Prostate gland (tissue), 2 donors: ENCODE measurements at regions of chr4 and their contacts with region 1.

Region 1: DNA sequence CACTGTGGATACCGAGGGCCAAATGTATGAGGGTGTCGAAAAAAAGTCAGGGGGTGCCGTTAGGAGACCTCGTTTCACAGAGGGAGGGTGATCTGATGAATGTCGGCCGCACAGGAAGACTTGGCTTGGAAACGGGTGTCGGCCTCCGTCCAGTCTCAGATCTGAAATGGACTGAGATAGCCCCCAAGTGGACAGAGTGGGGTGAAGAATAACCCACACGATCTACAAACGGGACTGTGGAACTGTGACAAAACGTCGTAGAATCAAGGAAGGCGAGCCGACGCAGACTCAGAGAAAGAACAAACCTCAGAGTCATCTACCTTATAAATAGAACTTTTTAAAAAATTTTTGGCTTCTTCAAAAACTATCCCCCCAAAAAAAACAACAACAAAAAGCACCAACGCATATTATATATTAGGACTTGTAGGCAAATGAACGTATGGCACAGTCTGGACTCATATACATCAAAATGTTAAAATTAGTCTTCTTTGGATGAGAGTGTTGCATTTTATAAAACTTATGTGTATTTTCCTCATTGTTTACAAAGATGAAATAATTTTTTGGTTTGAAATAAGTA is 63.8 kb upstream of the IRF2 start:
- DNase-seq: peak; percentile 92
- H3K4me3 ChIP-seq: peak overlapping the region; percentile 56 to 62
- H3K27ac ChIP-seq: peak overlapping the region; percentile 97 to 98
- H3K4me1 ChIP-seq: peaks cover 4% of the 10 kb centered on the region
- H3K27me3 ChIP-seq: no peaks in the 10 kb centered on the region
- CTCF ChIP-seq: peak; percentile 38 to 92 (median 78)
- POLR2A ChIP-seq: no peak

Region 2: DNA sequence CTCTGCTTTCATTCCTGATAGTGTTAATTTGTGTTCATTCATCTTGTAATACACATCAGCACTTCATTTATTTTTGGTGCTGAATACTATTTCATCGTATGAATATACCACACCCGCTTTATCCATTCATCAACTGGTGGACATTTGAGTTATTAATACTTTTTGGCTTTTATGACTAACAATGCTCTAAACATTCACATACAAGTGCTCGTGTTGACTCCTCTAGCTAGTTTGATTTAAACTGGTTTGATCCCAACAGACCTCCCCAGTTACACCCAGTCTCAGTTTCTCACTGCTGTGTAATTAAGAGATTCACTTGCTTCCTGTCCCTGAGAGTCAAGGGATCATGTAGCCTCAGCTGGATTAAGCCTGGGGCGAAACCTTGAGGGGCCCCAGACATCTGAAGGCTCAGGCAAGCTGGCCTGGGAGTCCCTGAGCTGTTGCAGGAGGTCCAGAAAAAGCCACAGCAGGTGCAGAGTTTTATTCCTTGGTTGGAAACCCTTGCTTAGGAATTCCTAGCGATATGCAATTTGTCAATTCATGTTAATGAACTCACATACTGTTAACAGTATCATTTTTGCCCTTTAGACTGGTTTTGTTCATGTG is 1163.1 kb before region 1 on chr4:
- intact Hi-C with region 1: no loop called
- DNase-seq: no peak
- H3K4me3 ChIP-seq: no peak overlapping the region
- H3K27ac ChIP-seq: no peak overlapping the region
- H3K4me1 ChIP-seq: no peaks in the 10 kb centered on the region
- H3K27me3 ChIP-seq: no peaks in the 10 kb centered on the region
- CTCF ChIP-seq: no peak
- POLR2A ChIP-seq: no peak

Region 3: GRCh38 chr4:184263910-184264732 is 274.0 kb before region 1 on chr4:
- intact Hi-C with region 1: loop called (anchors 2 kb)
- DNase-seq: peak; percentile 92
- H3K4me3 ChIP-seq: no peak overlapping the region
- H3K27ac ChIP-seq: no peak overlapping the region
- H3K4me1 ChIP-seq: no peaks in the 10 kb centered on the region
- H3K27me3 ChIP-seq: no peaks in the 10 kb centered on the region
- CTCF ChIP-seq: peak; percentile 86 to 97 (median 91)
- POLR2A ChIP-seq: no peak

Region 4: DNA sequence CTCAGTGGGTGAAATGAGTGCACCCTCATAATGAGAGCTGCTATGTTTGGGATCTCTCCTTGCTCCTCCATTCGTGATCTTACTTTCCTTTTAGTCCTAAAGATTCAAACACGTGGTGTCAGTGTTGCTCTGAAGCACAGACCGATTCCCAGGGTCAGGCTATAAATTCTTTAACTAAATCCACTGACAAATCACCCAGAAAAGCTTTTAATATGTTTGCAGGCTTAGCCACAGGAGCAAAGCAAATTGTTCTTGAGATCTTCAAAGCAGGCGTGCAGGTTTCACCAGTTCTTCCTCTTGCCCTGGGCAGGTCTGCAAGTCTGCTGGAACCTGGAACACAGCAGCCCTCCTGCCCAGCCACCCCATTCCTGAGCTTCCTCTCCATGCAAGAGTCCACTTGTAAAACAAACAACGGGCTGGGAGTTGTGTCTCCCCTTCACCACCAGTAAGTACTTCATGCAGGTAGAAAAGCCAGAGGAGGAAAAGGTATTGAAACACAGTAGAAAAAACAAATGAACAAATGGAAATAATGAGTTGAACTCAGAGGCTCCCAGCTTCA is 250.3 kb before region 1 on chr4:
- intact Hi-C with region 1: loop called (anchors 2 kb)
- DNase-seq: peak; percentile 94
- H3K4me3 ChIP-seq: peak overlapping the region in 1 of 2 donors; percentile 9
- H3K27ac ChIP-seq: peak overlapping the region; percentile 78 to 82
- H3K4me1 ChIP-seq: peaks cover 3% of the 10 kb centered on the region
- H3K27me3 ChIP-seq: no peaks in the 10 kb centered on the region
- CTCF ChIP-seq: peak in 3 of 4 experiments; percentile 42 to 65 (median 58)
- POLR2A ChIP-seq: no peak

Region 5: DNA sequence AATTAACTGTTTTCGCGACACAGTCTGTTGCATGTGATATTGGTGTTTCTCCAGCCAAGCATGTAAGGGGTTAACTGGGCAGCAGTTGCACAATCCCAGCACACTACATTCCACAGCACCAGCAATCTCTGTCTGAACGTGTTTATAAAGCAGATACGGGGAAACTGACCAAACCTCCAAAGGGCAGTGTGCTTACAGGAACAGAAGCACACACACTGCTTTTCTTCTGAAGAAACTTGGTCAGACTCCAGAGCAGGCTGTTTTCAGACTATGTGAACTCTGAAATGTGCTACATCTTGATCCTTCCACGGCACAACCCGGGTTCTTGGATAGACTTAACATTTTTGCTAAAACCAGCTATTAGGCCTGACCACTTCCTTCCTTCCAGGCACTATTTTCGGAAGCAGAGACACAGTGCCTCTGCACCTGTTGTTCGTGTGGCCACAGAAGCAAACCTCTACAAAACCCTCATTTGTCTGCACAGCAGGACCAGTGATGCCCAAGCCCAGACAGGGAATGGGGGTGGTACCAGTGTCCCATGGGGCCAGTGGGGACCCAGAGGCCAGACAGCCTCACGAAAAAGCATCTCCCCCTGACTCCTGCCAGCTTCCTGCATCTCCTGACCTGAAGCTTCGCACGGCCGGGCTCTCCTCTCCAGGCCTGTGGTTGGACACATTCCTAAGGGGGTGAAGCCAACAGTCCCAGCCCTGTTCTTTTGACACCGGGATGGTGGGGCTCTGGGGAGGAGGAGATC is 153.9 kb before region 1 on chr4:
- intact Hi-C with region 1: loop called (anchors 5 kb)
- DNase-seq: peak; percentile 71
- H3K4me3 ChIP-seq: peak overlapping the region in 1 of 2 donors; percentile 0
- H3K27ac ChIP-seq: peak overlapping the region; percentile 67 to 82
- H3K4me1 ChIP-seq: peaks cover 13% of the 10 kb centered on the region
- H3K27me3 ChIP-seq: no peaks in the 10 kb centered on the region
- CTCF ChIP-seq: no peak
- POLR2A ChIP-seq: peak; percentile 18

Region 6: DNA sequence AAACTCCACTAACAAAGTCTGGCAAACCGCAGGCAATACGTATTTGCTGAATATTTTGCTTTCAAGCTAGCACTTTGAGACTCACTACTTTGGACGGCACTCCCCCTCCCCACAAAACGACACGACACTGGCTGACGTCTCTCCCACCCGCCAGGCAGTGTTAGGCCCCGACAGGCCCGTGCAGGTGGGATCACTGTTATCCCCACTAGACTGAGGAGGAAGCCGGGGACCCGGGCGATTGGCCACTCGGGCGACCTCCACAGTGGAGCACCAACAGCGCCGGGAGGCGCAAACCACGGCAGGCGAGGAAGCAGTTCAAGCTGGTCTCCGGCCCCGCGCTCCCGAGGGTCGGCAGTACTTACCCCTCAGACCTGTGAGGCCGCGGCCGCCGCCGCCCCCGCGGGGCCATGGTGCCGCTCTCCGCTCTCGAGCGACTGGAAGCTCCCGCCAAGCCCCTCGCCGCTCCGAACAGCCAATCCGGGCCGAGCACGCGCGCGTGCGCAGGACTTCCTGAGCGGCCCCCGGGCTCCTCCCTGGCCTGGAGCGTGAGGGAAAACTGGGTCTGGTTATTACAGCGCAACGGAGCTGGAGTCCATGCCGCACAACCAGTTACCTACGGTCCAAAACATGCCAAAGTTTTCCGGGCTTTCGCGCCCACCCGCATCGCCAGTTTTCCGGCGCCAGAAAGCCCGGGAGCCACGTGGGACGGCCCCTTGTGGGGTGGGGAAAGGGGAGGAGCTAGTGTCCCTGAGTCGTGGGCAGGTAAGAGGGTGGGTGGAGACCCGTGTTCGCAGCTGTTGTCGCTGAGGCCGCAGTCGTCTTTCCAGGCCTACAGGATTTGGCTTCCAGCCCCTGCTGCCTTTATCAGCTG is 195.8 kb after region 1 on chr4 and contains the start of gene CENPU:
- intact Hi-C with region 1: loop called (anchors 5 kb)
- DNase-seq: peak; percentile 96
- H3K4me3 ChIP-seq: peak within 1 kb of the TSS; percentile 63 to 65
- H3K27ac ChIP-seq: peak within 1 kb of the TSS; percentile 61 to 77
- H3K4me1 ChIP-seq: no peaks in the 10 kb centered on the region
- H3K27me3 ChIP-seq: no peaks in the 10 kb centered on the region
- CTCF ChIP-seq: peak in 1 of 4 experiments; percentile 36
- POLR2A ChIP-seq: peak; percentile 67
- total RNA-seq, gene CENPU: 2.6 to 15.5 TPM